ENCODE measurements at regions of chr6 and their contacts with region 1.

Region 1: DNA sequence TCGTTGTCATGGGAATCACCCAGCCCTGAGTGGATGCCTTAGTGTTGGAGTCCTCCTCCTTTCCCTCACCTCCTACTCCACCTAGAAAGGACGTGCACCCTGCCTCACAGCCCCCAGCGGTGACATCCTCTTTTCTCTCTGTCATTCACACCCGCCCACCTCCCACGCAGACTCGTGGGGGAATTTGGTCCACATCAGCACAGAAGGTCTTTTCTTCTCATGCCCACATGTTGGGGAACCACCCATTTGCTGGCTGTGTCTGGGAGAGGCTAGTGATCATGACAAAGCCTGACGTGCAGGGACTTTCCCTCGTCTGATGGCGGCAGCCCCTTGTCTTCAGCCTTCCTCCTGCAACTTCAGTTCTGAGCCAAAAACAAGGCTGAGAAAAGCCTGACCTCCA is 96.0 kb upstream of the CNKSR3 start:
- DNase-seq: peak; percentile 86
- H3K4me3 Mint-ChIP-seq: peak overlapping the region; percentile 57
- H3K27ac Mint-ChIP-seq: peak overlapping the region; percentile 82
- H3K4me1 Mint-ChIP-seq: peaks cover 34% of the 10 kb centered on the region
- H3K27me3 Mint-ChIP-seq: no peaks in the 10 kb centered on the region

Region 2: DNA sequence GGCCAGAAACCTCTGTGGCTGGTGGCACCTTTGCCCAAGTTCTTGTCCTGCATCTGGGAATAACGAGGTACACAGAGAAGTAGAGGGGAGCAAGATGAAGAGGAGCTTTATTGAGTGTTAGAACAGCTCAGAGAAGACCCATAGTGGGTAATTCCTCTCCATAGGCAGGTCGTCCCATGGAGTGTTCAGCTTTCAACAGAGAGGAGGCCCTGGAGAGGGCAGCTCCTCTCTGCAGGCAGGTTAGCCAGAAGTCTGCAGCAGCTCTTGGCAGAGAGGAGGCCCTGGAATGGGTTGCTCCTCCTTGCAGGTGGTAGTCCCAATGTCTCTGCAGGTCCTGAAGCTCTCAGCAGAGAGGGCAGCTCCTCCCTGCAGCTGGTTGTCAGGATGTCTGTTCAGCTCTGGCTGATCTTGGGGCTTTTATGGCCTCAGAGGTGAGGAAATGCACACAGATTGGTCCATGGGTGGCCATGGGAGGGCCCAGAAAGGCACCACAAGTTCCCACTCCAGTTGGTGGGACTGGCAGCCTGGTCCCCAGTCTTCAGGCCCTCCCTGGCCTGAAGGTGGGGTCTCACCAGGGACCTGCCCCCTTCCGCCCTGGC is 338.9 kb before region 1 on chr6:
- intact Hi-C with region 1: loop called (anchors 1 kb)
- DNase-seq: no peak
- H3K4me3 Mint-ChIP-seq: no peak overlapping the region
- H3K27ac Mint-ChIP-seq: peak overlapping the region; percentile 39
- H3K4me1 Mint-ChIP-seq: peaks cover 15% of the 10 kb centered on the region
- H3K27me3 Mint-ChIP-seq: peaks cover 17% of the 10 kb centered on the region

Region 3: GRCh38 chr6:155530219-155530834 is 923.9 kb after region 1 on chr6:
- intact Hi-C with region 1: no loop called
- DNase-seq: peak; percentile 71
- H3K4me3 Mint-ChIP-seq: no peak overlapping the region
- H3K27ac Mint-ChIP-seq: no peak overlapping the region
- H3K4me1 Mint-ChIP-seq: peaks cover 10% of the 10 kb centered on the region
- H3K27me3 Mint-ChIP-seq: peaks cover 2% of the 10 kb centered on the region

Region 4: DNA sequence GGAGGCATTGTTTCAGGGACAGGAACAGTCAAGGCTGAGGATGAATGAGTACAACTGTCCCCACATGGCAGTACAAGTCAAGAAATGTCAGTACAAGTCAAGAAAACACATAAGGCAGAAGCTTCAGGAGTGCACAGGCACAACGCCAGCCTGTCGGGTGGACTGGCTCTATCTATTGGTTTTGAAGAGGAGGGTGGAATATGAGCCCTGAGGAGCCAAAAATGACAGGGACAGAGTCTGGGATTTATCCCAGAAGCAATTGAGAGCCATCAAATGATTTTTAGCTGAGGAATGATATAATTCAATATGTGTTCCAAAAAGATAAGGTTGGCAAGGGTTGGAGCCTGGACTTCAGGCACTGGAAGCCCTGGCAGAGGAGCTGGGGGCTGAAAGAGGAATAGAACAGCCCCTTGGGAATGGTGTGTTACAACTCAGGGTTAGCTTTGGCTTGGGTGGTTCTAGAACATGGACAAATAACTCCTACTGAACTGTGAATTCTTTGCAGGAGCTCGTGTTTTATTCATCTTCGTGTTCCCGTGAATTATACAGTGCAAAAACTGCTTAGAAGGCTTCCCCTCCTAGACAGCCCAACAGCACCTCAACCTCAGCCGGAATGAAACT is 1745.0 kb after region 1 on chr6:
- intact Hi-C with region 1: no loop called
- DNase-seq: peak; percentile 16
- H3K4me3 Mint-ChIP-seq: no peak overlapping the region
- H3K27ac Mint-ChIP-seq: no peak overlapping the region
- H3K4me1 Mint-ChIP-seq: no peaks in the 10 kb centered on the region
- H3K27me3 Mint-ChIP-seq: no peaks in the 10 kb centered on the region